ENCODE measurements at regions of chr13 and their contacts with region 1.

Region 1: GRCh38 chr13:112638157-112638750 is 50.3 kb upstream of the TUBGCP3 start:
- DNase-seq: no peak
- H3K4me3 ChIP-seq: no peak overlapping the region
- H3K27me3 ChIP-seq: peaks cover 11% of the 10 kb centered on the region
- CTCF ChIP-seq: no peak

Region 2: DNA sequence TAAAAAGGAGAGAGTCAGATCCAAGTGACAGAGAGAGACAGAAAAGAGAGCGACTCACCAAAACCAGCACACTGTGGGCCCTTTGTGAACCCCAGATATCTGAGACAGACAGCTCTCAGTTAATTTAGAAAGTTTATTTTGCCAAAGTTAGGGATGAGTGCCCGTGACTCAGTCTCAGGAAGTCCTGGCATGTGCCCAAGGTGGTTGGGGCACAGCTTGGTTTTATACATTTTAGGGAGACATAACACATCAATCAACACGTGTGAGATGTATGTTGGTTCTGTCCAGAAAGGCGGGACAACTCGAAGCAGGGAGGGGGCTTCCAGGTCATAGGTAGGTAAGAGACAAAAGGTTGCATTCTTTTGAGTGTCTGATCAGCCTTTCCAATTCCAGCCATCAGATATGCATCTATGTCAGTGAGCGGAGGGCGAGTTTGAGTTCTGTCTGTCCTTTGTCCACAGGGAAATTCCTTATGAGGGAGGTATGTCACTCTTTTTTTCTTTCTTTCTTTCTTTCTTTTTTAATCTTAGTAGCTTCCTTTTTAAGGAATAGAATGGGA is 14.3 kb after region 1 on chr13:
- CTCF ChIA-PET with region 1: interaction called, 23 read pairs
- POLR2A ChIA-PET with region 1: no interaction called
- DNase-seq: no peak
- H3K4me3 ChIP-seq: no peak overlapping the region
- H3K27me3 ChIP-seq: 0 out of 2 replicates have a peak, but pooled peaks cover 2% of the 10 kb centered on the region
- CTCF ChIP-seq: no peak